Ovary (tissue), 10 donors: ENCODE measurements at regions of chr12 and their contacts with region 1.

Region 1: DNA sequence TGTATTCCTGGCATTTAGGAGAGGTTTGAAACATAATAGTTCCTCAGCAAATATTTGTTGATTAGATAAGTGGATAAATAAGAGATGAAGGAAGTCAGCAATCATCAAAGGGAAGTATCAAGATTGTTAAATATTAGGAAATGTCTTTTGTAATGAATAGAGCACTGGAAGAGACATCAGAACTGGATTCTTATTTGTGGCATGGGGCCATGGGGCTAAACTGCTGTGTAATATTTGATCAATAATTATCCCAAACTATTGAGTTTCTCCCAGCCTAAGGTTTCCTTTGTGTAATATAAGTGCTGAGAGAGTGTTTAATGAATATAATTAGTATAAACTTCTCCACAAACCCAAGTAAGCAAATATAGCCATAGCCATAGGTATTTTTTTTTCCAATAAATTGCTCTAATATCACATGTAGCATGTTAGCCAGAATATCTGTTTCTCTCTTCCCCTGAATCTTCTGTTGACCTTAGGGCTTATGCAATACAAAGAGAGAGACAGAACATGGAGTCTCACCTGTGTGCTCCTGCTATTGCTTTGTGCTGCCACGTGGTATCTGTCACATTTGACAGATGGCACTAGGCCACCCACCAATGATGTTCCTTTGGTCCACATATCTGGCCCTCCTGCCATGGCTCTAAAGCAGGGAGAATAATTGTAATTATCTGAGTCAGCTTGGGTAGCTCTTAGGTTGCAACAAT is 658.7 kb downstream of the SOX5 start:
- DNase-seq: no peak
- H3K4me3 ChIP-seq: no peak overlapping the region
- H3K27ac ChIP-seq: no peak overlapping the region
- H3K4me1 ChIP-seq: peaks cover 2% of the 10 kb centered on the region
- H3K27me3 ChIP-seq: no peaks in the 10 kb centered on the region
- CTCF ChIP-seq: no peak
- EP300 ChIP-seq: no peak
- POLR2A ChIP-seq: no peak

Region 2: DNA sequence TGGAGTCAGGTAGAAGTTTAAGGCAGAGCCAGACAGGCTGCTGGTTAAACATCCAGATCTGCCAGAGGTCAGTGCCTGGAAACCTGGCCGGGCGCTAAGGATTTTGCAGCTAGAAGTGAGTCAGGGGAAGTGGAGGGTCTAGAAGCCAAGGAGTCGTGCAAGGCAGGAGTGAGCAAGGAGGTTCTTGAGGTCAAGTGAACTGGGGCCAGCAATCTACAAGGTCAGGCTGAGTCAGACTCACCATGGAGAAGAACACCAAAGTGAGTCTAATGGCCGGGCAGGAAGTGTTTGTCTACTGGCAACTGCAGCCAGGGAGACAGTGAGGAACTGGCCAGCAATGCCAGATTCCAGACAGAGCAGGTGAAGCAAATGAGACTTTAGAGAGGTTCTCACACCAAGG is 37.6 kb before region 1 on chr12:
- intact Hi-C with region 1: loop called in 1 of 4 experiments (anchors 2 kb)
- DNase-seq: no peak
- H3K4me3 ChIP-seq: no peak overlapping the region
- H3K27ac ChIP-seq: no peak overlapping the region
- H3K4me1 ChIP-seq: no peaks in the 10 kb centered on the region
- H3K27me3 ChIP-seq: no peaks in the 10 kb centered on the region
- CTCF ChIP-seq: no peak
- EP300 ChIP-seq: no peak
- POLR2A ChIP-seq: no peak

Region 3: GRCh38 chr12:23424685-23425084 is 133.9 kb after region 1 on chr12:
- intact Hi-C with region 1: no loop called
- DNase-seq: no peak
- H3K4me3 ChIP-seq: no peak overlapping the region
- H3K27ac ChIP-seq: no peak overlapping the region
- H3K4me1 ChIP-seq: no peaks in the 10 kb centered on the region
- H3K27me3 ChIP-seq: no peaks in the 10 kb centered on the region
- CTCF ChIP-seq: no peak
- EP300 ChIP-seq: no peak
- POLR2A ChIP-seq: no peak